ENCODE measurements at regions of chr15 and their contacts with region 1.

Region 1: GRCh38 chr15:41904541-41905005 is 10.7 kb upstream of the SPTBN5 start:
- DNase-seq: peak; percentile 58 to 70 (median 63)
- H3K4me3 ChIP-seq: no peak overlapping the region
- H3K4me3 Mint-ChIP-seq: no peak overlapping the region
- H3K27ac ChIP-seq: peak overlapping the region in 1 of 2 donors; percentile 56
- H3K27ac Mint-ChIP-seq: peak overlapping the region; percentile 44 to 90 (median 73)
- H3K4me1 ChIP-seq: peaks cover 7 to 12% of the 10 kb centered on the region in 2 donors
- H3K4me1 Mint-ChIP-seq: peaks cover 17% of the 10 kb centered on the region
- H3K27me3 ChIP-seq: no peaks in the 10 kb centered on the region
- H3K27me3 Mint-ChIP-seq: peaks cover 0 to 5% (median 0%) of the 10 kb centered on the region in 3 donors
- CTCF ChIP-seq: peak; percentile 88

Region 2: GRCh38 chr15:41774062-41774881 is 130.3 kb before region 1 on chr15 and contains the start of gene MAPKBP1:
- intact Hi-C with region 1: loop called (anchors 2 to 5 kb)
- DNase-seq: peak; percentile 98 to 100 (median 98)
- H3K4me3 ChIP-seq: peak within 1 kb of the TSS; percentile 72 to 89 (median 83)
- H3K4me3 Mint-ChIP-seq: peak within 1 kb of the TSS; percentile 83 to 91
- H3K27ac ChIP-seq: peak within 1 kb of the TSS; percentile 76 to 81
- H3K27ac Mint-ChIP-seq: peak within 1 kb of the TSS; percentile 81 to 96 (median 91)
- H3K4me1 ChIP-seq: peaks cover 28 to 32% of the 10 kb centered on the region in 2 donors
- H3K4me1 Mint-ChIP-seq: peaks cover 36% of the 10 kb centered on the region
- H3K27me3 ChIP-seq: no peaks in the 10 kb centered on the region
- H3K27me3 Mint-ChIP-seq: no peaks in the 10 kb centered on the region
- CTCF ChIP-seq: peak; percentile 57
- polyA plus RNA-seq, gene MAPKBP1: 0.76 to 8.6 (median 1.1) TPM

Region 3: GRCh38 chr15:41827880-41828806 is 76.4 kb before region 1 on chr15 and contains the start of gene JMJD7:
- intact Hi-C with region 1: loop called in 1 of 2 experiments (anchors 10 kb)
- DNase-seq: peak; percentile 80 to 87 (median 86)
- H3K4me3 ChIP-seq: peak within 1 kb of the TSS; percentile 62 to 94 (median 86)
- H3K4me3 Mint-ChIP-seq: peak within 1 kb of the TSS; percentile 95 to 98
- H3K27ac ChIP-seq: peak within 1 kb of the TSS; percentile 55 to 83
- H3K27ac Mint-ChIP-seq: peak within 1 kb of the TSS; percentile 69 to 94 (median 84)
- H3K4me1 ChIP-seq: peaks cover 17 to 19% of the 10 kb centered on the region in 2 donors
- H3K4me1 Mint-ChIP-seq: peaks cover 24% of the 10 kb centered on the region
- H3K27me3 ChIP-seq: peaks cover 0 to 3% of the 10 kb centered on the region in 2 donors
- H3K27me3 Mint-ChIP-seq: peaks cover 7 to 17% (median 8%) of the 10 kb centered on the region in 3 donors
- CTCF ChIP-seq: no peak
- polyA plus RNA-seq, gene JMJD7: 11.3 to 18.8 (median 15.2) TPM

Region 4: GRCh38 chr15:42215913-42216829 is 311.6 kb after region 1 on chr15:
- intact Hi-C with region 1: no loop called
- DNase-seq: no peak
- H3K4me3 ChIP-seq: no peak overlapping the region
- H3K4me3 Mint-ChIP-seq: no peak overlapping the region
- H3K27ac ChIP-seq: no peak overlapping the region
- H3K27ac Mint-ChIP-seq: peak overlapping the region in 1 of 7 donors; percentile 36
- H3K4me1 ChIP-seq: no peaks in the 10 kb centered on the region
- H3K4me1 Mint-ChIP-seq: peaks cover 7% of the 10 kb centered on the region
- H3K27me3 ChIP-seq: no peaks in the 10 kb centered on the region
- H3K27me3 Mint-ChIP-seq: no peaks in the 10 kb centered on the region
- CTCF ChIP-seq: no peak